ENCODE measurements at regions of chr2 and their contacts with region 1.

Region 1: DNA sequence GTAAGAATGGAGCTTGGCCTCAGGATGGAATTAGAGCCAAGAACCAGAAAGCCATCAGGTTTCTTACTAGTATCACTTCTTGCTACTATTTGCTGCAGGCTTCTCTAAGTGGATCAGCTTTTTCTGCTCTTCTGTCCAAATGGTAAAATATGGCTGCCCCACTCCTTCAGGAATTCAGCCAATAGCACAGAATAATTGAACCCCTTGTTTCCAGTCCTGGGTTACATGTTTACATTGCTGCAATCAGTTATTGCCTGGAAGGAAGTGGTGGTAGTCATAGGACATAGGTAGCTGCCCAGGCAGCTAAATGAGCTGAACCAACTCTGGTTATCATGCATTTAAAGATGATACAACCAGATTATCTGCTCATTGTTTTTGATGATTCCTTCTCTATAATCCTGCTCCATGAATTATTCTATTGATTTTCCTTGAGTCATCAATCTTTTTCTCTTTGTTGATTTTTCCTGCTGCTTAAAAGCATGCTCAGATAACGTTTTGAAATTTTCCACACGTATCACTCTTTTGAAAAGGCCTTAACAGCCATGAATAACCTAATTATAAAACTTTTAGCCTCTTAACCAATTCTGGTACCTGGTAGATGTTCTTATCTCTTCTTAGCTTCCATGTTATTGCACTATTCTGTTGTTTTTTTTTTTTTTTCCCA is 12.6 kb downstream of the AGPS start:
- DNase-seq: no peak
- ATAC-seq: no peak
- H3K4me3 ChIP-seq: no peak overlapping the region
- H3K27ac ChIP-seq: no peak overlapping the region
- H3K4me1 ChIP-seq: peaks cover 33% of the 10 kb centered on the region
- H3K27me3 ChIP-seq: no peaks in the 10 kb centered on the region
- CTCF ChIP-seq: no peak

Region 2: DNA sequence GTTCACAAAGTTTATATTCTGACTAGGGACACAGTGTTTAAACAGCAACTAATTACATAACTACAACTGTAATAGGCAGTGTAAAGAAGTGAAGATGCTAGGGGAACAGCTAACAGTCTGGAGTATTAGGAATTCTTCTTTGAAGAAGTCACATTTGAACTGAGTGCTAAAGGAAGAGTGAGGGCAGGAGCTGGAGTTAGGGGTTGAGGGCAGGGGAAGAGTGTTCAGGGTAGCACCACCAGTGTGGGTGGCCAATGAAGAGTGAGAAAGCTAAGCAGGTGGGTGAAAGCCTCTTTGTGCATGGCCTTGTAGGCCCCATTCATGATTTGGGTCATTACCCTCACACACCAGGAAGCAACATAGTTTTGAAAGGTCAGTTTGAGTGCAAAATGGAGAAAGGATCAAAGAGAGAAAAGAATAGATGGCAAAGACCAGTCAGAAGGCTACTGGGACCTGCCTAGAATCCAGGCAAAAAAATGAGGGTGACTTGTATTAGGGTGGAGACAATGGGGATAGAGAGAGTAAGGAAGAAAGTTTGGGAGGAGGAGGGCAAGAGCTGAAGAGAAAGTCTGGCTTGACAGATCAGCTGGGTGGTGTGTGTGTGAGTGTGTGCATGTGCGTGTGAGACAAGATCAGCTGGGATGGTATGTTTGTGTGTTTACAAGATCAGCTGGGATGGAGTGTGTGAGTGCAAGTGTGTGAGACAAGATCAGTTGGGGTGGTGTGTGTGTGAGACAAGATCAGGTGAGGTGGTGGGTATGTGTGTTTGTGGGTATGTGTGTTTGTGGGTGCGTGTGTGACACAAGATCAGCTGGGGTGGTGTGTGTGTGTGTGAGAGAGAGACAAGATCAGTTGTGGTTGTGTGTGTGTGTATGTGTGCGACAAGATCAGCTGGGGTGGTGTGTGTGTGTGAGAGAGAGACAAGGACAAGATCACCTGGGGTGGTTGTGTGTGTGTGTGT is 56.1 kb before region 1 on chr2:
- intact Hi-C with region 1: loop called in 1 of 2 experiments (anchors 5 kb)
- DNase-seq: no peak
- ATAC-seq: no peak
- H3K4me3 ChIP-seq: no peak overlapping the region
- H3K27ac ChIP-seq: no peak overlapping the region
- H3K4me1 ChIP-seq: no peaks in the 10 kb centered on the region
- H3K27me3 ChIP-seq: no peaks in the 10 kb centered on the region
- CTCF ChIP-seq: no peak